MCF 10A (cell line): ENCODE measurements at regions of chr5 and their contacts with region 1.

Region 1: DNA sequence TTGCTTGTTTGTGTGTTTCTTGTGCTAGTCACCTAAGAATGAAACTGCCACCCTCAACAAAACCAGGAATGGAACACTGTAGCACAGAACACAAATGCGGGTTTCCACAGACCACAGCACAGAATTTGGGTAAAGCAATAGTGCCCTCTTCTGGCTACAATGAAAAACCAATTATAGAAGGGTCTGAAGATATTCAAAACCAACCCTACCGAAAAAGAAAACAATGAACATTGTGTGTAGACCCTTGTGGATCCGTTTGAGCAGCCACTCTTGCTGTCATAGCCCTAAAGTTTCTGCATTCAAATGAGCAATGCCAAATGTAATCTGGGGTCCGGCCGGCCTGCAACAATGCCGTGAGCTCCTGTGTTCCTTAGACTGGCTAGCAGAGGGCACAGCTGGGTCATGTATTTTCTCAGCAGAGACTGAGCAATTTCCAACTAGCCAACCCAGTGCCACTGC is 8.3 kb upstream of the ENC1 start:
- DNase-seq: peak; percentile 71
- H3K4me3 Mint-ChIP-seq: no peak overlapping the region
- H3K27ac Mint-ChIP-seq: no peak overlapping the region
- H3K4me1 Mint-ChIP-seq: peaks cover 16% of the 10 kb centered on the region
- H3K27me3 Mint-ChIP-seq: no peaks in the 10 kb centered on the region
- CTCF ChIP-seq: peak; percentile 68

Region 2: GRCh38 chr5:73792687-73793320 is 856.1 kb before region 1 on chr5:
- CTCF ChIA-PET with region 1: no interaction called
- POLR2A ChIA-PET with region 1: interaction called, 3 read pairs
- intact Hi-C with region 1: loop called (anchors 1 kb)
- DNase-seq: peak; percentile 79
- H3K4me3 Mint-ChIP-seq: no peak overlapping the region
- H3K27ac Mint-ChIP-seq: no peak overlapping the region
- H3K4me1 Mint-ChIP-seq: peaks cover 13% of the 10 kb centered on the region
- H3K27me3 Mint-ChIP-seq: no peaks in the 10 kb centered on the region
- CTCF ChIP-seq: peak; percentile 96

Region 3: DNA sequence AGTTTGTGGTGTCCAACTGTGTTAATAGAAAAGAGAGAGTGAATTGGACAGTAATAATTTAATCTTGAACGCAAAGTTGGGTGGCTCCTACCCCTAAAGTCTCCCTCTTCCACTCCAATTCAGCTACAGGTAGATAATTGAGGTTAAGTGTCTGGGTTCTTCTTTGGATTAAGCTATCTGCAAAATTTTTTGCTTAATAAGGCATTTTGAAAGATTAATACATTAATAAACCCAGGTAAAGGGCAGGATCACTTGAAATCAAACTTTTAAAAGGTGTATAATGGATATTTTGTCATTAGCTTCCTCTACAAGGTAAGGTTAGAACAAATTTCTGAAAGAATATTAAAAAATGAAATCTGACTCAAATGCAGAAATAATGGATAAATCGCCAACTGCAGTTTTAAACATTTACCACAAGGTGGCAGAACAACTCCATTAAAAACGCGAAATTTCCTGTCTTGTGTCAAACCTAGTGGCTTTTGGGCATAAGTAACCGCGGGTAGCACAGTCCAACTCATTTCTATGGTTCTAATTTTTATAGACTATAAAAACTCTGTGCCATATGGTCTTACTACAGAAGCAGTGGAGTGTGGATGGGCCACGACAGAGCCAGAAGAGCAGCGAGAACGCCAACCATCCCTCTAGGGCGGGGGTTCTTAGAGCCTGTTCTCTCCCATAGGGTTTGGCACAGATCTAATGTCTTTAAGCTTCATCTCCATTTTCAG is 746.4 kb before region 1 on chr5:
- CTCF ChIA-PET with region 1: interaction called, 102 read pairs
- POLR2A ChIA-PET with region 1: interaction called, 34 read pairs
- intact Hi-C with region 1: loop called (anchors 1 kb)
- DNase-seq: peak; percentile 75
- H3K4me3 Mint-ChIP-seq: no peak overlapping the region
- H3K27ac Mint-ChIP-seq: peak overlapping the region; percentile 74
- H3K4me1 Mint-ChIP-seq: peaks cover 15% of the 10 kb centered on the region
- H3K27me3 Mint-ChIP-seq: no peaks in the 10 kb centered on the region
- CTCF ChIP-seq: peak; percentile 59

Region 4: DNA sequence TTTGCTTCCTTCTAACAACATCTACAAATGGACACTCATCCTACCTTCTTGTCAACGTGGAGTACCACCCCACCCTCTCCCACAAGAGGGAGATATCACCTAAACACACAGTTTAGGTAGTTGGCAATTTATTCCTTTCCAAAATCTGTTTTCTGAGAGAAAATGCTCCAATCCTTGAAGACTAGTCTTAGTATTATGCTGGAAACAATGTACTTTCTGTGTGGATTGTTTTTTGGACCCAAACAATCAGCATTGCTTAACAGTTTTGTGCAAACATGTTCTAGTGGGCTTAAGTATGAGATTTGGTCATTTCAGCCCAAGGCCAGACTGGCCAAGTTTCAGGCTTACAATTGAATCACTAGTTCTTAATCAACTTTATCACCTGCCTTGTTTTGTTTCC is 663.7 kb before region 1 on chr5:
- CTCF ChIA-PET with region 1: interaction called, 5 read pairs
- POLR2A ChIA-PET with region 1: no interaction called
- intact Hi-C with region 1: loop called (anchors 2 kb)
- DNase-seq: peak; percentile 43
- H3K4me3 Mint-ChIP-seq: no peak overlapping the region
- H3K27ac Mint-ChIP-seq: peak overlapping the region; percentile 55
- H3K4me1 Mint-ChIP-seq: peaks cover 6% of the 10 kb centered on the region
- H3K27me3 Mint-ChIP-seq: no peaks in the 10 kb centered on the region
- CTCF ChIP-seq: no peak

Region 5: GRCh38 chr5:74660140-74660539 is 11.3 kb after region 1 on chr5:
- CTCF ChIA-PET with region 1: interaction called, 12 read pairs
- POLR2A ChIA-PET with region 1: interaction called, 3 read pairs
- intact Hi-C with region 1: no loop called
- DNase-seq: no peak
- H3K4me3 Mint-ChIP-seq: no peak overlapping the region
- H3K27ac Mint-ChIP-seq: no peak overlapping the region
- H3K4me1 Mint-ChIP-seq: peaks cover 5% of the 10 kb centered on the region
- H3K27me3 Mint-ChIP-seq: no peaks in the 10 kb centered on the region
- CTCF ChIP-seq: no peak